PC-9 (cell line): ENCODE measurements at regions of chr1 and their contacts with region 1.

Region 1: GRCh38 chr1:28099050-28099769 is 10.8 kb upstream of the EYA3 start:
- DNase-seq: no peak
- H3K4me3 ChIP-seq: no peak overlapping the region
- H3K27ac ChIP-seq: no peak overlapping the region
- H3K4me1 ChIP-seq: no peaks in the 10 kb centered on the region
- H3K27me3 ChIP-seq: no peaks in the 10 kb centered on the region
- CTCF ChIP-seq: no peak

Region 2: GRCh38 chr1:28127617-28128257 is 28.5 kb after region 1 on chr1:
- CTCF ChIA-PET with region 1: no interaction called
- POLR2A ChIA-PET with region 1: no interaction called
- intact Hi-C with region 1: no loop called
- DNase-seq: no peak
- H3K4me3 ChIP-seq: no peak overlapping the region
- H3K27ac ChIP-seq: no peak overlapping the region; the same call in 1 of the 2 replicates
- H3K4me1 ChIP-seq: peaks cover 30% of the 10 kb centered on the region
- H3K27me3 ChIP-seq: no peaks in the 10 kb centered on the region
- CTCF ChIP-seq: no peak

Region 3: DNA sequence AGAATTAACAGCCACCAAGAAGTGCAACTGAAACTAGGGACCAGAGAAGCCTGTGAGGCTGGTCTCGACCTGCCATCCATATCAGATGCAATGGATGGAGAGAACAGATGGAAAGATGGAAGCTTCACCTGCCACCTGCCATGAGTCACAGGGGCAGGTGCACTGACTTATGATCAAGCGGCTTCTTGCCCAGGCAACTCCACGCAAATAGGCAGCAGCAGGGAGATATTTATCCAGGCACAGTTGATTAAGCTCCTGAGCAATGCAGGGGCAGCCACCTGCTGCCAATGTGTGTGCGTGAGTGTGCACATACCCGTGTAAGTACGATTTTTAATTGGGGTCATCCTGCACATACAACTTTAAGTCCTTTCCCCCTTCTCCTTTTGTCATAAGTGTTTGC is 1311.3 kb after region 1 on chr1:
- CTCF ChIA-PET with region 1: no interaction called
- POLR2A ChIA-PET with region 1: interaction called, 11 read pairs
- intact Hi-C with region 1: no loop called
- DNase-seq: no peak
- H3K4me3 ChIP-seq: no peak overlapping the region
- H3K27ac ChIP-seq: no peak overlapping the region
- H3K4me1 ChIP-seq: no peaks in the 10 kb centered on the region
- H3K27me3 ChIP-seq: no peaks in the 10 kb centered on the region
- CTCF ChIP-seq: no peak